K562 (cell line): ENCODE measurements at regions of chr20 and their contacts with region 1.

Region 1: DNA sequence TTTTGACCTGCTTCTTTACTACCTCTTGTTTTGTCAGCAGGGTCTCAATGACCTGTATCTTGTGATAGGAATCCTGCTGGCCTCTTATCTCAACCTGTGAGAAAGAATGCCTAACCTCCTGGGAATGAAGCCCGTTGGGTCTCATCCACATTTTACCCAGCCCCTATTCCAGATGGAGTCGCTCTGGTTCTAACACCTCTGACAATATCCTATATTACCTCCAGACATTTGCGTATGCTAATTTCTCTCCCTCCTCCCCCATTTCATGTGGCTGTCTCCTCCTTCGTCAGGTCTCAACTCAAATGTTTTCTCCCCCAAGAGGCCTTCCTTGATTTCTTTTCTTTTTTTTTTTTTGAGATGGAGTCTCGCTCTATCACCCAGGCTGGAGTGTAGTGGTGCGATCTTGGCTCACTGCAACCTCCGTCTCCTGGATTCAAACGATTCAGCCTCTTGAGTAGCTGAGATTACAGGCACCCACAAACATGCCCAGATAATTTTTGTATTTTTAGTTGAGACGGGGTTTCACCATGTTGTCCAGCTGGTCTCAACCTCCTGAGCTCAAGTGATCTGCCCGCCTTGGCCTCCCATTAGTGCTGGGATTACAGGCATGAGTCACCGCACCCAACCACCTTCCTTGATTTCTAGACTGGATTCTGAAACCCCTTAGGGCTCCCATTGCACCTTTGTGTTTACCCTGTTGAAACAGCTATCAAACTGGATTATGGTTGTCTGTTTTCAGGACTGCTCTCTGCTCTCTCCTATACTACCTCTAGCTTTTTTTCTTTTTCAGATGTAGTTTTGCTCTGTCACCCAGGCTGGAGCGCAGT is 49.5 kb upstream of the B4GALT5 start:
- DNase-seq: peak in 3 of 4 experiments; percentile 30 to 64 (median 32)
- ATAC-seq: peak; percentile 13
- H3K4me3 ChIP-seq: no peak overlapping the region
- H3K27ac ChIP-seq: peak overlapping the region; percentile 97
- H3K4me1 ChIP-seq: peaks cover 31 to 52% of the 10 kb centered on the region in 2 experiments
- H3K27me3 ChIP-seq: no peaks in the 10 kb centered on the region
- CTCF ChIP-seq: no peak
- EP300 ChIP-seq: no peak
- POLR2A ChIP-seq: no peak
- RAD21 ChIP-seq: no peak; a peak in 1 of 4 replicates

Region 2: DNA sequence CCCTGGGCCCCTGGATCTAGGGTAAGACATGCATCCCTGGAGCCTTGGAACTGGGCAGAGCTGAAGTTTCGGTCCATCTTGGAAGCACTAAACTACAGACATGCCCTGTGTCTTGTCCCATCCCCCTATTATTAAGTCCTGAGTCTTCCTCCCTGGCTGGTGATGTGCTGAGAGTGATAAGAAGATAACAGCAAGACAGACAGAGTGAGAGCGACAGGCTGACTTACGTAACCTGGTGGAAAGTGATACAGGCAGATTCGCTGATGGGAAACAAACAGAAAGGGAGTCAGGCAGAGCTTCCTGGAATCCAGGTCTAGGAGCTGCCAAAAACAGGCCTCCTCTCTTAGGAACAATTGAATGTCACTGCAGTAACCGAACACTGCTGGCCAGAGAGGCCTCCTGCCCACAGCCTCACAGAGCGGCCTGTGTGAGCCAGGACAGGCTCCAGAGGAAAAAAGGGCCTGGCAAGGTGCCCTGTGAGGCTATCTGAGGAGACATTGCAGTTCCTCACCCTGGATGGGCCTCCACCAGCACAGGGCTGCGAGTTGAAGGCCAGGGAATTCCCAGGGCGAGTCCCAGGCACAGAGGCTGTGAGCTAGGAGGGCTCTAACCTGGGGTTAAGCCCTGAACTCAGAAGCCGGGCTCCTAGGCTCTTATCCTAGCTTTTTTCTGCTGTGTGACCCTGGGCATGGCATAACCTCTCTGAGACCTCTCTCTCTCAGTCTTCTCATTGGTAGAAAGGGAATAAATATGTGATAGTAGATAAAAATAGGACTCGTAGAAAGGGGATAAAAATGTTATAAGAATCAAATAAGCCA is 15.2 kb before region 1 on chr20:
- CTCF ChIA-PET with region 1: no interaction called
- POLR2A ChIA-PET with region 1: interaction called, 26 read pairs
- in situ Hi-C with region 1: no loop called
- intact Hi-C with region 1: no loop called
- DNase-seq: peak in 3 of 4 experiments; percentile 67 to 73 (median 68)
- ATAC-seq: peak; percentile 75
- H3K4me3 ChIP-seq: no peak overlapping the region
- H3K27ac ChIP-seq: peak overlapping the region; percentile 41
- H3K4me1 ChIP-seq: peaks cover 11 to 17% of the 10 kb centered on the region in 2 experiments
- H3K27me3 ChIP-seq: no peaks in the 10 kb centered on the region
- CTCF ChIP-seq: no peak
- EP300 ChIP-seq: peak; percentile 68
- POLR2A ChIP-seq: no peak
- RAD21 ChIP-seq: no peak

Region 3: DNA sequence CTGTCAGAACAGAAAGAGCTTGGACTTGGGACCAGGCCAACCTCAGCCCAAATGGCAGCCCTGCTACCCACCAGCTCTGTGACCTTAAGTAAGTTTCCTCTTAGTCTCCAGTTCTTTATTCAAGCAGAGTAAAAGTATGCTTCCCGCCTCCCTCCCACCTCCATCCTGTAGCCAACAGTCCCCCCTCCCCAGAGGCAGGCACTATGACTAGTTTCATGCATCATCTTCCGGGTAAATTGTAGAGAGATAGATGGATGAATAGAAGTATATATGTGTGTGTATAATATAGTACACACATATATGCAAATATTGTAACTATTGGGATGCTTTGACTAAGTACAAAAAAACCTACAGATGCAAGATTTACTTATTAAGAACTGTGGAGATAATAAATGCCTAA is 10.0 kb before region 1 on chr20:
- CTCF ChIA-PET with region 1: no interaction called
- POLR2A ChIA-PET with region 1: interaction called, 26 read pairs
- in situ Hi-C with region 1: no loop called
- intact Hi-C with region 1: no loop called
- DNase-seq: no peak
- ATAC-seq: no peak
- H3K4me3 ChIP-seq: no peak overlapping the region
- H3K27ac ChIP-seq: no peak overlapping the region
- H3K4me1 ChIP-seq: peaks cover 7 to 8% of the 10 kb centered on the region in 2 experiments
- H3K27me3 ChIP-seq: no peaks in the 10 kb centered on the region
- CTCF ChIP-seq: no peak
- EP300 ChIP-seq: no peak
- POLR2A ChIP-seq: no peak
- RAD21 ChIP-seq: no peak